ENCODE measurements at regions of chr7 and their contacts with region 1.

Region 1: DNA sequence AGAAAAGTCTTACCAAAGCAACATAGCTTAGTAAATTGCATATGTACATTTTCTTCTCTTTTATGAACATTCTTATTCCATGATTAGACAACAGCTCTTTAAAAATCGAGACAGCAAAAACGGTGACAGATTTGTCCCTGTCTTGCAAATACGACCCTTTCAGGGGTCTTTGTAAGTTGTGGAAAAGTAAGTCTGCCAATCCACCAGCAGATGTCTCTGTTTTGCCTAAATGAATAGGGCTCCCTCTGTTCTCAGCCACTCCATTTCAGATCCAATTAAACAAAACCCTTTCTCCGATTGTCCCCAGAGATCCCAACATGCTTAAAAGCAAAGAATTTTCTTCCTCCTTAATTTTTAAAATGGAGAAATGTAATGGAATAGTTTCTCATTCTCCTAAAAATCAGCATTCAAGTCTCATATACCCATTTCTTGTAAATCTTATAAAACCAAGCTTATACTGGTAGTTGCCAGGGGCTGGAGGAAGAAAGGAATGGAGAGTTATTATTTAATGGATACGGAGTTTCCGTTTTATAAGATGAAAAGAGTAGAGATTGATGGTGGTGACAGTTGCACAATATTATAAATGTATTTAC is 61.0 kb upstream of the NFE2L3 start:
- DNase-seq: peak; percentile 74
- H3K4me3 ChIP-seq: no peak overlapping the region
- H3K27ac ChIP-seq: no peak overlapping the region
- H3K4me1 ChIP-seq: no peaks in the 10 kb centered on the region
- H3K27me3 ChIP-seq: peaks cover 0 to 3% of the 10 kb centered on the region in 2 experiments
- CTCF ChIP-seq: peak; percentile 54 to 62
- POLR2A ChIP-seq: no peak

Region 2: GRCh38 chr7:26078437-26079336 is 12.3 kb before region 1 on chr7:
- CTCF ChIA-PET with region 1: interaction called, 16 read pairs
- POLR2A ChIA-PET with region 1: no interaction called
- dilution Hi-C with region 1: no loop called
- intact Hi-C with region 1: no loop called
- DNase-seq: peak; percentile 45
- H3K4me3 ChIP-seq: no peak overlapping the region
- H3K27ac ChIP-seq: no peak overlapping the region
- H3K4me1 ChIP-seq: no peaks in the 10 kb centered on the region
- H3K27me3 ChIP-seq: peaks cover 27 to 54% of the 10 kb centered on the region in 2 experiments
- CTCF ChIP-seq: peak; percentile 13 to 45
- POLR2A ChIP-seq: no peak

Region 3: GRCh38 chr7:26160881-26161280 is 69.9 kb after region 1 on chr7:
- CTCF ChIA-PET with region 1: interaction called, 14 read pairs
- POLR2A ChIA-PET with region 1: no interaction called
- dilution Hi-C with region 1: no loop called
- intact Hi-C with region 1: no loop called
- DNase-seq: no peak
- H3K4me3 ChIP-seq: no peak overlapping the region
- H3K27ac ChIP-seq: no peak overlapping the region
- H3K4me1 ChIP-seq: peaks cover 35% of the 10 kb centered on the region
- H3K27me3 ChIP-seq: no peaks in the 10 kb centered on the region
- CTCF ChIP-seq: no peak
- POLR2A ChIP-seq: no peak

Region 4: GRCh38 chr7:26187380-26188205 is 96.6 kb after region 1 on chr7:
- CTCF ChIA-PET with region 1: interaction called, 36 read pairs
- POLR2A ChIA-PET with region 1: no interaction called
- dilution Hi-C with region 1: no loop called
- intact Hi-C with region 1: loop called (anchors 1 kb)
- DNase-seq: no peak
- H3K4me3 ChIP-seq: no peak overlapping the region
- H3K27ac ChIP-seq: no peak overlapping the region
- H3K4me1 ChIP-seq: peaks cover 4% of the 10 kb centered on the region
- H3K27me3 ChIP-seq: no peaks in the 10 kb centered on the region
- CTCF ChIP-seq: no peak
- POLR2A ChIP-seq: peak; percentile 70

Region 5: DNA sequence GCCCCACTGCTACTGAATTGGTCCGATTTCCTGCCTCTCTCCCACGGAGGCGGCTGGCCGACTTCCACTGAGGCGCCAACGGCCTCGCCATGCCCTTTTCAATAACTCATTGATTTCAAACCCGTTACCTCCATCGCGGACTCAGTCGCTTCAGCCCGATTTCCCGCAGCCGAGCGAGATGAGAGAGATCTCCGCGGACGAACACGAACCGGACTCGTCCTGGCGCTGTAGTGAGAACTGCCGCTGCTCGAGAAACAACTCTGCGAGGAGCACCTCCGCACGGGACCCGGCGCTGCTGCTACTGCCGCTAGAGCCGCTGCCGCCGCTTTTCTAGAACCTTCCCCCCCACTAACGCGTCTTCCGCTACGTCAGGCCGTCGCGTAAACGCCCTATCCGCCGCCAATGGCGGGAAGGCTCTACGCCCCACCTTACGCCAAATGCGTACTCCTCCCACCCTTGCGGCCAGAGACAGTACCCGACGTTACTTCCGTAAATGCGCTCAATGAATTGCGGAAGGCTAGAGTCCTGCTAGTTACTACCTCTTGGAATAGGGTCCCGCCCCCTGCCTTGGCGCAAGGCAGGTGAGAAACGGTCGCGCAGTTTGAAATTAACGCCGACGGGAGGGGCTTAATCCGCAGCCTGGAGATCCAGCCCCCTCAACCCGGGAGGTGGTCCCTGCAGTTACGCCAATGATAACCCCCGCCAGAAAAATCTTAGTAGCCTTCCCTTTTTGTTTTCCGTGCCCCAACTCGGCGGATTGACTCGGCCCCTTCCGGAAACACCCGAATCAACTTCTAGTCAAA is 109.6 kb after region 1 on chr7 and contains the start of gene HNRNPA2B1:
- CTCF ChIA-PET with region 1: interaction called, 98 read pairs
- POLR2A ChIA-PET with region 1: no interaction called
- dilution Hi-C with region 1: no loop called
- intact Hi-C with region 1: loop called (anchors 1 kb)
- DNase-seq: peak; percentile 99
- H3K4me3 ChIP-seq: peak within 1 kb of the TSS; percentile 98 to 100 (median 98)
- H3K27ac ChIP-seq: peak within 1 kb of the TSS; percentile 97
- H3K4me1 ChIP-seq: peaks cover 40% of the 10 kb centered on the region
- H3K27me3 ChIP-seq: no peaks in the 10 kb centered on the region
- CTCF ChIP-seq: no peak
- POLR2A ChIP-seq: peak; percentile 100
- total RNA-seq, gene HNRNPA2B1: 703 and 717 TPM in 2 replicates